Activated T-helper 1 cell treated with anti-CD3 and anti-CD28 coated beads, Interleukin-12 subunit alpha, Interleukin-12 subunit beta, Interleukin-2, Interleukin-4 antibody, amounts not matched to agents 30 ng/mL and 10 ng/mL and 1 ng/mL, durations not matched to agents 14 hours and 24 hours and 36 hours (primary cell): ENCODE measurements at regions of chr1 and their contacts with region 1.

Region 1: GRCh38 chr1:200488375-200489165 is 78.7 kb upstream of the ZNF281 start:
- DNase-seq: peak; percentile 46
- H3K4me3 Mint-ChIP-seq: no peak overlapping the region
- H3K27ac Mint-ChIP-seq: no peak overlapping the region
- H3K4me1 Mint-ChIP-seq: peaks cover 24% of the 10 kb centered on the region
- H3K27me3 Mint-ChIP-seq: peaks cover 21% of the 10 kb centered on the region

Region 2: DNA sequence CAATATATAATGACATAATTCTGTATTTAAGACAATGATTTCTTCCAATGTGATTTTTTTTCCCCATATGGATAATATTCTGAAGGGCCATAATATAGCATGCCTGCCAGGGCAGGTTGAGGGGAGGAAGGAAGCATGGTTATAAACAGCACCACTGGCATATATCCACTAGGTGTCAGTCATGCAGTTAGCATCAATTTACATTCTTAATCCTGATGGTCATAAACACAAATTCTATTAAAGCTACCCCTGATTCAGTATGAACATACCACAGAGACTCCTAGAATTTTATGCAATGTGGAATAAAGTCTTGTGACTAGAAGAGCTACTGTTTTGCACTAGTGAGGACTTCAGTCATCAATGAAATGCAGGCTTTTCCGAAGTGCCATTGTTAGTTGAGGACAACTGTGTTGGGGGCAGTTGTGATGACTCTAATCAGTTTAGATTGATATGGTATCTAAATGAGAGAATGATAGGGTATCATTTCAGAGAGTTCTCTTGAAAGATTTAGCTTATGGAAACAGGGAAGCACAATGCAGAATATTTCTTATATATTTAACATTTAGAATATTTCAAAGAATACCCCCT is 803.8 kb before region 1 on chr1:
- intact Hi-C with region 1: loop called (anchors 1 kb)
- DNase-seq: no peak
- H3K4me3 Mint-ChIP-seq: no peak overlapping the region
- H3K27ac Mint-ChIP-seq: no peak overlapping the region
- H3K4me1 Mint-ChIP-seq: no peaks in the 10 kb centered on the region
- H3K27me3 Mint-ChIP-seq: peaks cover 23% of the 10 kb centered on the region

Region 3: DNA sequence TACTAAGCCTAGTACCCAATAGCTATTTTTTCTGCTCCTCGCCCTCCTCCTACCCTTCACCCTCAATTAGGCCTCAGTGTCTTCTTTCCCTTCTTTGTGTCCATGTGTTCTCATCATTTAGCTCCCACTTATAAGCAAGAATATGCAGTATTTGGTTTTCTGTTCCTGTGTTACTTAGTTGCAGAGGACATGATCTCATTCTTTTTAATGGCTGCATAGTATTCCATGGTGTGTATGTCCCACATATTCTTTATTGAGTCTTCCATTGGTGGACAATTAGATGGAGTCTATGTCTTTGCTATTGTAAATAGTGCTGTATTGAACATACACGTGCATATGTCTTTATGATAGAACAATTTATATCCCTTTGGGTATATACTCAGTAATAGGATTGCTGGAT is 567.9 kb before region 1 on chr1:
- intact Hi-C with region 1: no loop called
- DNase-seq: no peak
- H3K4me3 Mint-ChIP-seq: no peak overlapping the region
- H3K27ac Mint-ChIP-seq: no peak overlapping the region
- H3K4me1 Mint-ChIP-seq: no peaks in the 10 kb centered on the region
- H3K27me3 Mint-ChIP-seq: peaks cover 34% of the 10 kb centered on the region

Region 4: GRCh38 chr1:200139661-200140250 is 348.8 kb before region 1 on chr1:
- intact Hi-C with region 1: loop called (anchors 1 kb)
- DNase-seq: no peak
- H3K4me3 Mint-ChIP-seq: no peak overlapping the region
- H3K27ac Mint-ChIP-seq: no peak overlapping the region
- H3K4me1 Mint-ChIP-seq: peaks cover 29% of the 10 kb centered on the region
- H3K27me3 Mint-ChIP-seq: peaks cover 11% of the 10 kb centered on the region

Region 5: DNA sequence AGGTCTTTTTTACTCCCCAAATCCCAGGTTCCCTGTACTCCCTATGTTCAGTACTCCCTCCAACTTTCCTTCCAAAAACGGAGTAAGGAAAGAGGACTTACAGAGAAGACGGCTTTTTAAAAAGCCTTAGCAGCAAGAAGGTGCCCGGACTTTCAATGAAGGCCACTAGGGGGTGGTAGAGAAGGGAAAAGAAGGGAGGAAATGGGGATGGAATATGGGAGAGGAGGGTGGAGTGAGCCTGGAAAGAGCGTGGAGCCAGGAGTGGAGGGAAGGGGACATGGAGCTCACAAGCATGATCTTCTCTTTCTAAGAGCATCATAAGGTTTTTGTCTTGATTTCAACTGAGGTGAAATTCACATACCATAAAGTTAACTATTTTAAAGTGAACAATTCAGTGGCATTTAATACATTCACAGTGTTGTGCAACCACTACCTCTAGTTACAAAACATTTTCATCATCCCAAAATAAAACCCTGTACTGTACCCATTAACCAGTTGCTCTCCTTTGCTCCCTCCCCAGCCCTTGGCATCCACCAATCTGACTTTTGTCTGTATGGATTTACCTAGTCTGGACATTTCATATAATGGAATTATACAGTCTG is 208.7 kb before region 1 on chr1:
- intact Hi-C with region 1: loop called (anchors 1 kb)
- DNase-seq: no peak
- H3K4me3 Mint-ChIP-seq: no peak overlapping the region
- H3K27ac Mint-ChIP-seq: no peak overlapping the region
- H3K4me1 Mint-ChIP-seq: no peaks in the 10 kb centered on the region
- H3K27me3 Mint-ChIP-seq: peaks cover 10% of the 10 kb centered on the region

Region 6: GRCh38 chr1:200351826-200352549 is 136.6 kb before region 1 on chr1:
- intact Hi-C with region 1: loop called (anchors 1 kb)
- DNase-seq: no peak
- H3K4me3 Mint-ChIP-seq: peak overlapping the region; percentile 68
- H3K27ac Mint-ChIP-seq: peak overlapping the region; percentile 77
- H3K4me1 Mint-ChIP-seq: peaks cover 51% of the 10 kb centered on the region
- H3K27me3 Mint-ChIP-seq: peaks cover 2% of the 10 kb centered on the region

Region 7: DNA sequence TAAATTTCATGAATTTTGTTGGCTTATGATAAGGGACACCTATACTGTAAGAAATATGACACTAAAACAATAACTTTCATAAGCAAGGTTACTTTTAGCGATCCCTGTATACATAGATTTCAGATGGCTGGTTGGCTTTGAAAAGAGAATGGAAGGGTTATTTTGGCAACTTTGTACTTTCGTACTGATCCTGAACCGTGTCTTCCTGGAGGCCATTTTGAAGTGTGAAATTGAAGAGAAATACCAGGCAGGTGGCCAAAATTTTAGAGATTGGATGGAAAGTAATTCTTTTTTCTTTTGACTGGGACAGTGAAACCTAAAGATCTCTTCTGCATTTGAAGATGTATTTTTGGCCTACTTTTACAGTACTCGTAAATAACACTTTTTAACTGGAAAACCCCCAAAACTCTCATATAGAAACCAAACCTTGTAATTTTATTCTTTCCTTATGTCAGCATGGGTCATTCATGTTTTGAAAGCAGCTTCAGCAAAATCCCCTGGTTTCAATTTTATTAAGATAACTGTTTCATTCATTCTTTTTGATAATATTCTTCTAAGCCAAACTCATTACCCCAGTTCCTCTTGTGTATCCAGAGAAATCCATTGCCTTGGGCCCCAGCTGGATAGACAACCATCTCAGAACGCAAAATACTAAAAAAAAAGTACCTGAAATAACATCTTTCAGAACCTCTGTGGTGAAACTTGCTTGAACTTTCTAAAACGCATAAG is 40.4 kb before region 1 on chr1:
- intact Hi-C with region 1: loop called (anchors 1 kb)
- DNase-seq: no peak
- H3K4me3 Mint-ChIP-seq: peak overlapping the region; percentile 53
- H3K27ac Mint-ChIP-seq: peak overlapping the region; percentile 97
- H3K4me1 Mint-ChIP-seq: peaks cover 59% of the 10 kb centered on the region
- H3K27me3 Mint-ChIP-seq: no peaks in the 10 kb centered on the region

Region 8: DNA sequence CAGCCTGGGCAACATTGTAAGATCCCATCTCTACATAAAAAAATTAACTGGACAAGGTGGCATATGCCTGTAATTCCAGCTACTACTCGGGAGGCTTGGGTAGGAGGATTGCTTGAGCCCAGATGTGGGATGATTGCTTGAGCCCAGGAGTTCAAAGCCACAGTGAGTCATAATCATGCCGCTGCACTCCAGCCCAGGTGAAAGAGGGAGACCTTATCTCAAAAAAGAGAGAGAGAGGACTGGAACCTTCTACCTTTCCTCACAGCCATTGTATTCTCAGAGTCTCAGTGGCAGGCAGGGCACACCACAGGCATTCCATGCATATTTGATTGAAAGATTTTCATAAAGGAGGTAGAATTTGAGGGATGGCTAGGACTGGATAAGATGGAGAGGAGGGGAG is 53.6 kb after region 1 on chr1:
- intact Hi-C with region 1: no loop called
- DNase-seq: no peak
- H3K4me3 Mint-ChIP-seq: no peak overlapping the region
- H3K27ac Mint-ChIP-seq: no peak overlapping the region
- H3K4me1 Mint-ChIP-seq: peaks cover 5% of the 10 kb centered on the region
- H3K27me3 Mint-ChIP-seq: peaks cover 23% of the 10 kb centered on the region